Sigmoid colon (tissue), 7 donors: ENCODE measurements at regions of chr1 and their contacts with region 1.

Region 1: DNA sequence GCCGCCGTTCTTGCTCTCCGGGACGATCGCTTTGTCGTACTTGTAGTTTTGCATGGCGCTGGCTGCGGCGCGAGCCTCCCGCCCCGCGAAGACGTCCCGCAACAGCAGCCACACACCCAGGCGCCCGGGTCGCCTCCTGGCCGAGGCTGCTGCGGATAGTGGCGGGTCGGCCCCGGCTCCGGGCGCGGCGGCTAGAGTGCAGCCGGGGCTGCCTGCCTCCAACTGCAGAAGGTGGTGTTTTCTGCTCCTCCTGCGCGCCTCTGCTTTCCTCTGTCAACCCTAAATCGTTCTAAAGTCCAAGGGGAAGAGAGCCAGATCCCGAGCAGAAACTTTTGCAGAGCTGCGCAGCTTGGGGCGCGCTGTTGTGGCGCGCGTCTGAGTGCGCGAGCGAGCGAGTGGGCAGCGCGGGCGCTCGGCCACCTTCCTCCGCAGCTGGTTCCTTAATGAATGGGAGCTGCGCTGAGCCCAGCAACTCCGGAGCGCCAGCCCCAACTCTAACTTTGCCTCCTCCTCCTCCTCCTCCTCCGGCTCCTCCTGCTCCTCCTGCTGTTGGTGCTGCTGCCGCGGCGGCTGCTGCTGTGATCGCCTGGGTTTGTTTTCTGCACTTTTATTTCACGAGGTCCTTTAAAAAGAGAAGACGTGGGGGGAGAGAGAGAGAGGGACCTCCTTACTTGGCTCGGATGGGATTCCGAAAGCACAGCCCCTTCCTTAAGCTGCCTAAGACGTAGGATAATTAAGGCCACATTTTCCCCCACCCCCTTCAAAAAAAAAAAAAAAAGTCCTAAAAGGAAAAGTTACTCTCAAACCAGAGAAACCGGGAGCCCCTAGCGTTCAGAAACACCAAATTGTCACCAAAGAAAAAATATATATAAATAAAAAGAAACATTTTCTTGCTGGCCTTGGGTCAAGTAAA is at the start of gene PLPP3:
- DNase-seq: peak; percentile 95
- H3K4me3 ChIP-seq: peak within 1 kb of the TSS; percentile 73 to 95 (median 90)
- H3K27ac ChIP-seq: peak within 1 kb of the TSS; percentile 89 to 96 (median 92)
- H3K4me1 ChIP-seq: peaks cover 0 to 35% (median 15%) of the 10 kb centered on the region in 4 donors
- H3K27me3 ChIP-seq: no peaks in the 10 kb centered on the region
- CTCF ChIP-seq: peak in 3 of 4 experiments; percentile 26 to 45 (median 28)
- EP300 ChIP-seq: no peak
- POLR2A ChIP-seq: peak; percentile 73 to 79
- total RNA-seq, gene PLPP3: 92.8 to 136 (median 109) TPM

Region 2: GRCh38 chr1:55813618-55814017 is 765.6 kb before region 1 on chr1:
- intact Hi-C with region 1: loop called (anchors 10 kb)
- DNase-seq: peak; percentile 95
- H3K4me3 ChIP-seq: no peak overlapping the region
- H3K27ac ChIP-seq: peak overlapping the region; percentile 22 to 70 (median 48)
- H3K4me1 ChIP-seq: peaks cover 0 to 24% (median 15%) of the 10 kb centered on the region in 4 donors
- H3K27me3 ChIP-seq: no peaks in the 10 kb centered on the region
- CTCF ChIP-seq: no peak
- EP300 ChIP-seq: peak; percentile 76 to 96 (median 92)
- POLR2A ChIP-seq: no peak

Region 3: GRCh38 chr1:56056438-56057287 is 522.6 kb before region 1 on chr1:
- intact Hi-C with region 1: loop called (anchors 10 kb)
- DNase-seq: no peak
- H3K4me3 ChIP-seq: no peak overlapping the region
- H3K27ac ChIP-seq: peak overlapping the region in 3 of 4 donors; percentile 36 to 56 (median 41)
- H3K4me1 ChIP-seq: peaks cover 0 to 28% (median 27%) of the 10 kb centered on the region in 4 donors
- H3K27me3 ChIP-seq: no peaks in the 10 kb centered on the region
- CTCF ChIP-seq: no peak
- EP300 ChIP-seq: no peak
- POLR2A ChIP-seq: no peak

Region 4: DNA sequence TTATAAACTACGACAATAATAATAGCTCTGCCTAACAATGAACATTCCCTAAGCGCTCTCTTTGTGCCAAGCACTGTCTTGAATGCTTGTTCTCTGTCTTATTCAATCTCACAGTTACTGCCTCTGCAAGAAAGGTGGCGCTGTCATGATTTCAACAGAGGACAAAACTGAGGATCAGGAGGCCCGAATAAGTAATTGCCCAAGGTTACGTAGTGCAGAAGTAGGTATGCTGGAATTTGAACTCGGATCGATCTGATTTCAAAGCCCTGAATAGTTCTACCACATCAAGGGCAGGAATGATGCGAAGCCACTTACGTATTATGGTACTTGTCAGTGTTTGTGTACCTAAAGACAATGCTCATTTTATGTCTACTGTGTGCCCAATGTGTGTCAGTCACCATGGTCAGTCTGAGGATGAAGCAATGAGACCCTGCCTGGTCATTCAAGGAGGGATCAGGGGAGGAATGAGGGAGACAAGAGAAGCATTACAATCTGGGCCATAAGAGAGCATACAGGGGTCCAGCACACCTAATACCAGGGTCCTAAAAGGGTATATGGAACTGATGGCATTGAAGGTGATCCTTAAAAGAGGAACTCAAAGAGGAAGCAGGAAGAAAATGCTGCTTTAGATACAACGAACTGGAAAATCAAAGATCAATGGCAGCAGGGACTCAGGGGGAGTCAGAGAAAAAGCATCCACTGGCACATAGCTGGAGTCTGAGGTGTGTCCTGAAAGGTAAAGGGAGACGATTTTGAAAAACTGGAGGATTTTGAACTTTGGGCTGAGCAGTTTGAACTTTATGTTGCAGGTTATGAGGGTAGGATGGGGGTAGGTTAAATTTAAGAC is 389.1 kb before region 1 on chr1:
- intact Hi-C with region 1: loop called (anchors 10 kb)
- DNase-seq: no peak
- H3K4me3 ChIP-seq: no peak overlapping the region
- H3K27ac ChIP-seq: no peak overlapping the region
- H3K4me1 ChIP-seq: peaks cover 0 to 11% (median 4%) of the 10 kb centered on the region in 4 donors
- H3K27me3 ChIP-seq: no peaks in the 10 kb centered on the region
- CTCF ChIP-seq: no peak
- EP300 ChIP-seq: no peak
- POLR2A ChIP-seq: no peak

Region 5: DNA sequence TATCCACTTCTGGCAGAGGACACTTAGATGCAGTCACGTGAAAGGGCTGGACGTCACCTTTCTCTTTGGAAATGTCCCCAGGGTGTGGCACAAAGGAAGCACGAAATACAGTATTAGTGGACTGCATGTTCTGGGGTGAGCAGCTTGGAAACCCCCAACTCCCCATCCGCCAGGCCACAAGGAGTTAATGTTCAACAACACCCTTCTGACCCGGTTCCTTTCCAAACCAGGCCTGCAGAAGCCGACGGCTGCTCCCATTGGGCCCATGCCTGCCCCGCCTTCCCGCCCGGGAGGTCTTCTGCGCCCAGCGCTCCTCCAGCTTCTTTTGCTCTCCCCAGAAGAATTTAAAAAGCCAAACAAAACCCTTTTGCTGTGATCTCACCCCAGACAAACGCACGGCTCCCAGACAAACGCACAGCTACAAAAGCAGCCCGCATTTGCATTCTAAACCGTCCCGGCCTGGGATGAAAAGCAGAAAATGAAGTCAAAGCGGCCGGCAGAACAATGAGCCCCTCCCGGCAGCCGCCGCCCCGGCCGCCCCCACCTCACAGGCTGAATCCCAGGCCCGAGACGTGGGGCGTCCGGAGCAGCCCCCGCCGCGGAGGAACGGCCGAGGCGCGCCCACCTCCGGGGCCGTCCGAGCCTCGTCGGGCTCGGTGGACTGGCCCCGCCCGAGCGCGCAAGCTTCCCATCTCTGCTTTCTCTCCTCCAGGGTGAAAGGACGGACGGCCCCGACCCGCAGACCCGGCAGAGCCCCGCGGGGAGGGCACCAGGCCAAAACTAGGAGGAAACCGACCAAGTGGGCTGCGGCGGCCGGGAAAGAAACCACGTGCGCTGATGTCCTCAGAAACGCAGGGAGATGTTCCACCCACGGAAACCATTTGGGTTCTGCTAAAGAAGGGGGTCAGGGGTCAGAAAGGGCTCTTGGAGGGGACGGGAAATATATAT is 101.8 kb before region 1 on chr1:
- intact Hi-C with region 1: loop called (anchors 2 kb)
- DNase-seq: peak; percentile 87
- H3K4me3 ChIP-seq: peak overlapping the region; percentile 49 to 67 (median 58)
- H3K27ac ChIP-seq: peak overlapping the region; percentile 83 to 94 (median 91)
- H3K4me1 ChIP-seq: peaks cover 0 to 14% (median 7%) of the 10 kb centered on the region in 4 donors
- H3K27me3 ChIP-seq: no peaks in the 10 kb centered on the region
- CTCF ChIP-seq: no peak
- EP300 ChIP-seq: no peak
- POLR2A ChIP-seq: no peak

Region 6: DNA sequence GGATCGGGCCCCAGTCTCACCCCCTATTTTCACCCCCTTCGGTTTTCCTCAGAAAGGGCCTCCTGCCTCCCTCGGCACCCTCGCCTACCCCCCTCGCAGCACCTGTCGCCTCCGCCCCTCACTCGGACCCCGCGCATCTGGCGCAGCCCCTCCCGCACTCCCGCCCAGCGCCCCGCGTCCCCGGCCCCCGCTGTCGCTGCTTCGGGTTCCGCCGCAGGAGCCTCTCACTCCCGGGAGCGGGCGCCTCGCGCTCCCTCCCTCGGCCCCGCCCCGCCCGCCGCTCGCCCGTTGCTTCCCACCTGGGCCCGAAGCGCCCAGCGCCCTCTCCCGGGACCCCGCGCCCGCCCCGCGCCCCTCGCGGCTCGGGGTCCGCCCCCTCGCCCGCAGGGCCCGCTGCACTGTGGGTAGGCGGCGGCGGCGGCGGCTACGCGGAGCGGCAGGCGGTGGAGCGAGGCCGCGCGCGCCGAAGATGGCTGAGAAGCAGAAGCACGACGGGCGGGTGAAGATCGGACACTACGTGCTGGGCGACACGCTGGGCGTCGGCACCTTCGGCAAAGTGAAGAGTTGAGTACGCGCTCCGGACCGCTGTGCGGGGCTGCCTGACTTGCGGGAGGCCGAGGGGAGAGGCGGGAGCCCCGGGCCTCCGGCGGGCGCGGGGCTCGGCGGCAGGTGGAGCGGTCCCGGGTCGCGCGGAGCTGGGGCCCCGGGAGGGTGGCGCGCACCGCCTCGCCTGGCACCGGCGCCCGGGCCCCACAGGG is 65.9 kb after region 1 on chr1 and contains the start of gene PRKAA2:
- intact Hi-C with region 1: no loop called
- DNase-seq: peak; percentile 68
- H3K4me3 ChIP-seq: peak within 1 kb of the TSS; percentile 50 to 78 (median 74)
- H3K27ac ChIP-seq: peak within 1 kb of the TSS; percentile 83 to 90 (median 86)
- H3K4me1 ChIP-seq: peaks cover 0 to 23% (median 14%) of the 10 kb centered on the region in 4 donors
- H3K27me3 ChIP-seq: no peaks in the 10 kb centered on the region
- CTCF ChIP-seq: no peak
- EP300 ChIP-seq: no peak
- POLR2A ChIP-seq: no peak
- total RNA-seq, gene PRKAA2: 25.3 to 30.8 (median 27.8) TPM